ENCODE measurements at regions of chr20 and their contacts with region 1.

Region 1: GRCh38 chr20:32509639-32510066 is 75.5 kb downstream of the NOL4L start:
- DNase-seq: peak; percentile 82
- H3K4me3 Mint-ChIP-seq: peak overlapping the region; percentile 71
- H3K27ac Mint-ChIP-seq: peak overlapping the region; percentile 90
- H3K4me1 Mint-ChIP-seq: peaks cover 90% of the 10 kb centered on the region
- H3K27me3 Mint-ChIP-seq: no peaks in the 10 kb centered on the region

Region 2: DNA sequence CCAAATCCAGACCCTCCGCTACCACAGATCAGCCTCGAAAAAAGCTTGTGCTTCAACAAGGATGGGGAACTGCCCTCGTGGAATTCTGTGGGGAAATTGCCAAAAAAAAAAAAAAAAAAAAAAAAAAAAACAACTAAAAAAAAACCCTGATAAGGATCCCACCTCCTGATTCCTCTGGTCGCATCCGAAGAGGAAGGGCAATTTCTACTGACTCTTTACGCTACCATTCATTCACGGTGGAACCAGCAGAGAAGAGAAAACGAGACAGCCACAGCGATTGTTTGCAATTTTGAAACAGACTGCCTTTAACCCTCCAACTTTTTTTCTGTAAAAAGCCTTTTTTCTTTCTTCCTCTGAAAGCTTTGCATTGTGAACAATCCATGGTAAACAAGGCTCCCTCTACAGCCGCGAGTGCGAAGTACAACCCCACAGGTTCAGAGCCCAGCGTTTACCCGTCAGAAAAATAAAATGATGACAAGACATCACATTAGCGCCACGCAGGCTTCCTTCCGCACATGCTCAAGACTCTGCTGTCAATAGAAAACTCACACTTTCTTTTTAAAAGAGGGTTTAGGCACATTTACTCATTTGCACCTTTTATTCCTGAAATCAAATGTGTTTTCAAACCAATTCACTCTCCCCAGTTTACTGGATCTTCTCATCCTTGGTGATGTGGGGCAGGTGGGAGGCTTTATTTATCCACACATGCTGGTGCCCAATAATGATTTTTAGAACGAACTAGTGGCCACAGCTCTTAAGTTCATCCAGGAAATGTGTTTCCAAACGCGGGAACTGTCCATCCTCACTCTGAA is 24.5 kb before region 1 on chr20:
- CTCF ChIA-PET with region 1: interaction called, 19 read pairs
- intact Hi-C with region 1: loop called (anchors 1 kb)
- DNase-seq: peak; percentile 95
- H3K4me3 Mint-ChIP-seq: peak overlapping the region; percentile 84
- H3K27ac Mint-ChIP-seq: peak overlapping the region; percentile 93
- H3K4me1 Mint-ChIP-seq: peaks cover 39% of the 10 kb centered on the region
- H3K27me3 Mint-ChIP-seq: no peaks in the 10 kb centered on the region

Region 3: DNA sequence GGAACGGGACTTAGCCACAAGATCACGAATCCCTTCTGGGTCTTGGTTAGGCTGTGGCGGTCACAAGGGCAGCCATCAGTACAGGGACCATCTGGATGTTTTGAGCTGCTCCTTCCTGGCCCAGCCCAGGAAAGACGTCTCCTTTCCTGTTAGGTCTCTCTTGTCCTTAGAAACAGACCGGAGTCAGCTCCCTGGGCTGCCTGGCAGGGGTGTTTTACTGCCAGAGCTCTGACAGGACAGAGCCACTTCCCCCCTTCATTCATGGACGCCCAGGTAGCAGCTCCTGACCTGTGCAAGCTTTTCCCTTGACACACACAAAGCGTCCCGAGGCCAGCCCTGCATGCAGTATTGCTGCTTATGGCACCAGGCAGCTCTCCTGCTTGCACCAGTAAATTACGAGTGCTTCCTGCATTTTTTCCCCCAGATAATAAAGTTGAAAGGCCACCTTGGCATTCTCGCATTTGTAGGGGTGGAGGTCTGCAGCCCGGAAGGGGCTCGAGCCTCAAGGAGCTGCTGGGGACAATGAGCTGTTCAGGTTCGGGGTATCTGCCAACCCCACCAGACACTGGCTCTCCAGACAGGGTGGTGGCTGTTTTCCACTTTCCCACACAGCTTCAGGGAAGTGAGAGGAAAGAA is 11.9 kb before region 1 on chr20:
- CTCF ChIA-PET with region 1: interaction called, 11 read pairs
- intact Hi-C with region 1: no loop called
- DNase-seq: no peak
- H3K4me3 Mint-ChIP-seq: no peak overlapping the region
- H3K27ac Mint-ChIP-seq: no peak overlapping the region
- H3K4me1 Mint-ChIP-seq: peaks cover 32% of the 10 kb centered on the region
- H3K27me3 Mint-ChIP-seq: no peaks in the 10 kb centered on the region

Region 4: GRCh38 chr20:32762149-32762753 is 252.6 kb after region 1 on chr20 and contains the start of gene DNMT3B:
- CTCF ChIA-PET with region 1: interaction called, 4 read pairs
- intact Hi-C with region 1: loop called (anchors 5 kb)
- DNase-seq: peak; percentile 79
- H3K4me3 Mint-ChIP-seq: peak within 1 kb of the TSS; percentile 79
- H3K27ac Mint-ChIP-seq: no peak within 1 kb of the TSS
- H3K4me1 Mint-ChIP-seq: peaks cover 12% of the 10 kb centered on the region
- H3K27me3 Mint-ChIP-seq: no peaks in the 10 kb centered on the region
- total RNA-seq, gene DNMT3B: 2.0 to 2.2 TPM